MCF 10A (cell line): ENCODE measurements at regions of chr5 and their contacts with region 1.

Region 1: GRCh38 chr5:112551419-112552032 is 132.4 kb upstream of the EPB41L4A start:
- DNase-seq: peak; percentile 69
- H3K4me3 Mint-ChIP-seq: no peak overlapping the region
- H3K27ac Mint-ChIP-seq: no peak overlapping the region
- H3K4me1 Mint-ChIP-seq: peaks cover 8% of the 10 kb centered on the region
- H3K27me3 Mint-ChIP-seq: no peaks in the 10 kb centered on the region
- CTCF ChIP-seq: peak; percentile 68

Region 2: DNA sequence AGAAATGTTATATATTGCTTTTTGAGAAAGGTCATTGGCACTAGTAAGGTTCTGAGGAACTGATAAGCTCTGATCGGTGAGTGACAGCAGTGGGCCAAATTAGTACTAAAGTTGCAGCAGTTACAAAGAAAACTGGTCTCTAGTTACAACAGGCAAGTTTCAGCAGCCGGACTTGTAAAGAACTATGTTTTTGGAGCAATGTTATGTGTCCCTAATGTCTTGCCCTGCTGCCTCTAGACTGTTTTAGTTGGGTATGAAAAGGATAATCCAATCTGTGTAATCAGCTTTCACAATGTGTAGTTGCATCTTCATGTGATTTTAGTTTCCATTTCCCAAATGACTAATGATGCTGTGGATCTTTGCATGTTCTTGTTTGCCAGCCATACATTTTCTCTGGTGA is 1213.8 kb before region 1 on chr5:
- CTCF ChIA-PET with region 1: no interaction called
- POLR2A ChIA-PET with region 1: no interaction called
- intact Hi-C with region 1: no loop called
- DNase-seq: no peak
- H3K4me3 Mint-ChIP-seq: no peak overlapping the region
- H3K27ac Mint-ChIP-seq: no peak overlapping the region
- H3K4me1 Mint-ChIP-seq: no peaks in the 10 kb centered on the region
- H3K27me3 Mint-ChIP-seq: peaks cover 55% of the 10 kb centered on the region
- CTCF ChIP-seq: no peak

Region 3: DNA sequence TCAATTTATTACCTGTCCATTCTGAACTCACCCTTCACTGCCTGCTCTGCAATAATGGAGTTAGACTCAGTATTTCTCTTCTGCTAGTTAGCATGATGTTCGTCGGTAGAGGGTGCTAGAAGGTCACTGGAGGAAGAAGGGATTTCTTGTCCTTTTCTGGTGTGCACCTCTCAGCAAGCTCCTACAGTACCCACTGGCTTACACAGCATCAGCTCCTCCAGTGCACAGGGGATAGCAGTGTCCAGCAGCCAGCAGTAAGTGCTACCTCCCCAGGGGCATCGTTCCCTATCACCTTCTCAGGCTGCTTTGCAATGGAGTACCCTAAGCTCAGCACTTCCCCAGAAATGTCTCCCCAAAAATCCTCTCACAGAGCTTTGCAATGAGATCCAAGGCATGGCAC is 140.2 kb after region 1 on chr5:
- CTCF ChIA-PET with region 1: interaction called, 3 read pairs
- POLR2A ChIA-PET with region 1: no interaction called
- intact Hi-C with region 1: loop called (anchors 2 kb)
- DNase-seq: peak; percentile 73
- H3K4me3 Mint-ChIP-seq: no peak overlapping the region
- H3K27ac Mint-ChIP-seq: no peak overlapping the region
- H3K4me1 Mint-ChIP-seq: no peaks in the 10 kb centered on the region
- H3K27me3 Mint-ChIP-seq: no peaks in the 10 kb centered on the region
- CTCF ChIP-seq: peak; percentile 37

Region 4: DNA sequence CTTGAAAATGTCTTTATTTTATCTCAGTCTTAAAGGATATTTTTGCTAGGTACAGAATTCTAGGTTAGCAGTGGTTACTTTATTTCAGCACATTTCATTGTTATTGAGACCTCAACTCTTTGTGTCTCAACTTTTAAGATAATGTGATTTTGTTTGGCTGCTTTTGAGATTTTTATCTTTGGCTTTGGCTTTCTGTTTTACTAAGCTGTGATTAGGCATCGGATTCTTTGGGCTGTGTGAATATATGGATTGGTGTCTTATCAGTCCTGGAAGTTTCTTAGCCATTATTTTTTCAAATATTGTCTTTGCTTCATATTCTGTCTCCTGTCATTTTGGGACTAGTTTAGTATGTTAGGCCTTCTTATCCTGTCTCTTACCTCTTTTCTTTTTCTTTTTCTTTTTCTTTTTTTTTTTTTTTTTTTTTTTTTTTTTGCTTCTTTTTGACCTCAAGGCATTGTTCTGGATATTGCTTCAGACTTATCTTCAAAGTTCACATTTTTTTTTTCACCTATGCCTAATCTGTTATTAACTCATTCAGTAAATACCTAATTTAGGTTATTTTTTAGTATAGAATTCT is 166.1 kb after region 1 on chr5:
- CTCF ChIA-PET with region 1: no interaction called
- POLR2A ChIA-PET with region 1: no interaction called
- intact Hi-C with region 1: no loop called
- DNase-seq: no peak
- H3K4me3 Mint-ChIP-seq: no peak overlapping the region
- H3K27ac Mint-ChIP-seq: no peak overlapping the region
- H3K4me1 Mint-ChIP-seq: no peaks in the 10 kb centered on the region
- H3K27me3 Mint-ChIP-seq: no peaks in the 10 kb centered on the region
- CTCF ChIP-seq: no peak

Region 5: DNA sequence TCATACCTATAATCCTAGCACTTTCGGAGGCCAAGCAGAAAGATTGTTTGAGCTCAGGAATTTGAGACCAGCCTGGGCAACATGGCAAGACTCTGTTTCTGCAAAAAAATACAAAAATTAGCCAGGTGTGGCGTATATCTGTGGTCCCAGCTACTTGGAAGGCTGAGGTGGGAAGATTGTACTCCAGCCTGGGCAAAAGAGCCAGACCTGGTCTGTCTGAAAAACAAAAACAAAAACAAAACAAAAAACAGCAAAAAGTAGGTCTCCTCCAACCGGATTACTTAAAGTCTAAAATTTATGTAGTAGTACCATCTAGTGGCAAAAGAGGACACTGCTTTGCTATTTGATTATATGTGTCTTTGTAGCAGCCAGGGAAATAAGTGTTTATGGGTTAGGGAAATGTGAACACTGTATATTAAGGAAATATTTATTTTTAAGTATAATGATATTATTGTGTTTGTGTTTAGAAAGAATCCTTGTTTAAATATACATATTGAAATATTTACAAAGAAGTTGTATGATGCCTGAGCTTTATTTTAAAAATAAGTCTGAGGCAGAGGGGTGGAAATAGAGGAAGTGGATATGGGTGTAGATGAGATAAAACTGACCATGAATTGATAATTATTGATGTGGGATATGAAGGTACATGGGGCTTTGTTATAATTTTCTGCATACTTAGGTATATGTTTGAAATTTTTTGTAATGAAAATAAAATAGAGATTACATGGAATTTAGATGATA is 206.1 kb after region 1 on chr5:
- CTCF ChIA-PET with region 1: interaction called, 315 read pairs
- POLR2A ChIA-PET with region 1: interaction called, 4 read pairs
- intact Hi-C with region 1: loop called (anchors 1 kb)
- DNase-seq: peak; percentile 61
- H3K4me3 Mint-ChIP-seq: no peak overlapping the region
- H3K27ac Mint-ChIP-seq: no peak overlapping the region
- H3K4me1 Mint-ChIP-seq: peaks cover 21% of the 10 kb centered on the region
- H3K27me3 Mint-ChIP-seq: no peaks in the 10 kb centered on the region
- CTCF ChIP-seq: peak; percentile 68

Region 6: DNA sequence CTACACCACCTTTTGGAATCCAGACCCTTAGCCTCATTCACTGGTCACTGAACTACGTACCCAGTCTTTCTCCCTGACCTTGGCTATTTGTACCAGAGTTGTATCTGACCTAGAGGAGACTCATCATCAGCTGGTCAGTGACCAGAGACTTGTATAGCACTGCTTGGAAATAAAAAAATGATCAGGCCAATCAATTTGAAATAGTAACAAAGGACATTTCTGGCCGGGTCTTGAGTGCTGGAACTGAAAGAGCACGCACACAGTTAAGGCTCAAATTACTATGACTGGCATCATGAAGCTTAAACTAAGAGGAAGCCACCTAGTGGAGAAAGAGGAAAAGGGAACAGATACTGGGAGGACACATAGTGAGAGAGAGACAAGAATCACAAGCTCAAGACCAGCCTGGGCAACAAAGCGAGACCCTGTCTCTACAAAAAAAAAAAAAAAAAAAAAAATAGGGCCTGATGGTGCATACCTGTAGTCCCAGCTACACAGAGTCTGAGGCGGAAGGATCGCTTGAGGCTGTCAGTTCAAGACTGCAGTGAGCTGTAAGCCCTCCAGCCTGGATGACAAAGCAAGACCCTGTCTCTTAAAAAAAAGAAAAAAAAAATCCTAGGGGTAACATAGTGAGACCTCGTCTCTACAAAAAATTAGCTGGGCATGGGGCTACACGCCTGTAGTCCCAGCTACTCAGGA is 296.7 kb after region 1 on chr5:
- CTCF ChIA-PET with region 1: interaction called, 10 read pairs
- POLR2A ChIA-PET with region 1: no interaction called
- intact Hi-C with region 1: loop called (anchors 1 kb)
- DNase-seq: peak; percentile 80
- H3K4me3 Mint-ChIP-seq: no peak overlapping the region
- H3K27ac Mint-ChIP-seq: no peak overlapping the region
- H3K4me1 Mint-ChIP-seq: no peaks in the 10 kb centered on the region
- H3K27me3 Mint-ChIP-seq: no peaks in the 10 kb centered on the region
- CTCF ChIP-seq: peak; percentile 37

Region 7: DNA sequence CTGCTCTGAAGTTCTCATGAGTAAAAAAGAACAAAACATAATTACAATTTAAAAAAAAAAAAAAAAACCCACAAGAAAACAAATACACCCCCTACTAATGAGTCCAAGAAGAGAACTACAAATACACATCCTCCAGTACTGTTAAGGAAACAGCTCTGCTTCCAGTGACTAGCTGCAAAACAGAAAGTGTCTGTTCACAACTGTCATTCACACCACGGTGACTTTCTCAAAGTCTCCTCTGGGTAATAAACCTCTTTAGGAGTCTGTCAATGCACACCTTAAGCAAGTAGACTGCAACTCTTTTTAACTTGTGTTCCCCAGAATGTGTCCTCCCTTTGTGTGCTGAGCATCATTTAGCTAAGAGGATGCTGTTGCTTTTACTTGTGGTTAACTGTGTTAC is 364.3 kb after region 1 on chr5:
- CTCF ChIA-PET with region 1: no interaction called
- POLR2A ChIA-PET with region 1: no interaction called
- intact Hi-C with region 1: no loop called
- DNase-seq: no peak
- H3K4me3 Mint-ChIP-seq: no peak overlapping the region
- H3K27ac Mint-ChIP-seq: peak overlapping the region; percentile 29
- H3K4me1 Mint-ChIP-seq: peaks cover 32% of the 10 kb centered on the region
- H3K27me3 Mint-ChIP-seq: no peaks in the 10 kb centered on the region
- CTCF ChIP-seq: no peak

Region 8: GRCh38 chr5:113606298-113607134 is 1055.0 kb after region 1 on chr5:
- CTCF ChIA-PET with region 1: interaction called, 3 read pairs
- POLR2A ChIA-PET with region 1: no interaction called
- intact Hi-C with region 1: loop called (anchors 1 kb)
- DNase-seq: peak; percentile 70
- H3K4me3 Mint-ChIP-seq: no peak overlapping the region
- H3K27ac Mint-ChIP-seq: no peak overlapping the region
- H3K4me1 Mint-ChIP-seq: no peaks in the 10 kb centered on the region
- H3K27me3 Mint-ChIP-seq: no peaks in the 10 kb centered on the region
- CTCF ChIP-seq: peak; percentile 91